Heart left ventricle (tissue), 16 donors: ENCODE measurements at regions of chr2 and their contacts with region 1.

Region 1: GRCh38 chr2:237616734-237617586 is 10.4 kb upstream of the LRRFIP1 start:
- DNase-seq: no peak
- ATAC-seq: peak; percentile 82 to 92 (median 88)
- H3K4me3 ChIP-seq: no peak overlapping the region
- H3K27ac ChIP-seq: peak overlapping the region; percentile 39 to 92 (median 85)
- H3K4me1 ChIP-seq: peaks cover 5 to 52% (median 40%) of the 10 kb centered on the region in 12 donors
- H3K27me3 ChIP-seq: no peaks in the 10 kb centered on the region
- CTCF ChIP-seq: no peak
- POLR2A ChIP-seq: no peak

Region 2: DNA sequence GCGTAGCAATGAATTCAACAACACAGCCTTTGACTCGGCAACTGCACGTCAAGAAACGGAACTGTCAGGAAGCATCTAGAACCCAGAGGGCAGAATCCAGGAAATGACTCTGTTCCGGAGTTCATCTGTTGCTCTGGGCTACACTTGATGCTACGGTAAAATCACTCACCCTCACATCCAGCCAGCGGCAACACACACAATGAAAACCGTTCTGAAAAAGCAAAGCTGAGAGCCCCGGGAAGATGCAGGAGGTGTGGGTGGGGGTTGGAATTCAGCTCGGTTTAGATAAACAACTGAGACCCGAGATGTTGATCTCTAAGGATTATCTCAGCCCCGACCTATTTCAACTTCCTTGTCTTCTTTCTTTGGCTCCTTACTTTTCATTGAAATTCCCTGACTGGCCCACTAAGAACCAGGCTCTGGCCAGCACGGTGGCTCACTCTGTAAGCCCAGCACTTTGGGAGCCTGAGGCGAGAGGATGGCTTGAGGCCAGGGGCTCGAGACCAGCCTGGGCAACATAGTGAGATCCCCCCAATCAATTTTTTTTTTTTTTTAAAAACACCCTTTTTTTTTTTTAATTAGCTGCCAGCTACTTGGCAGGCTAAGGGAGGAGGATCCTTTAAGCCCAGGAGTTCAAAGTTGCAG is 13.1 kb before region 1 on chr2:
- intact Hi-C with region 1: loop called in 1 of 10 experiments (anchors 2 kb)
- DNase-seq: peak in 2 of 5 donors; percentile 54 to 63
- ATAC-seq: peak in 3 of 4 donors; percentile 21 to 70 (median 56)
- H3K4me3 ChIP-seq: peak overlapping the region in 3 of 12 donors; percentile 8 to 15 (median 12)
- H3K27ac ChIP-seq: peak overlapping the region in 7 of 12 donors; percentile 17 to 57 (median 30)
- H3K4me1 ChIP-seq: peaks cover 0 to 41% (median 28%) of the 10 kb centered on the region in 12 donors
- H3K27me3 ChIP-seq: no peaks in the 10 kb centered on the region
- CTCF ChIP-seq: no peak
- POLR2A ChIP-seq: no peak

Region 3: GRCh38 chr2:237886685-237887481 is 269.9 kb after region 1 on chr2:
- intact Hi-C with region 1: no loop called
- DNase-seq: peak; percentile 87 to 97 (median 89)
- ATAC-seq: peak; percentile 86 to 90 (median 88)
- H3K4me3 ChIP-seq: no peak overlapping the region
- H3K27ac ChIP-seq: peak overlapping the region; percentile 65 to 100 (median 92)
- H3K4me1 ChIP-seq: peaks cover 0 to 46% (median 18%) of the 10 kb centered on the region in 12 donors
- H3K27me3 ChIP-seq: no peaks in the 10 kb centered on the region
- CTCF ChIP-seq: no peak
- POLR2A ChIP-seq: no peak

Region 4: DNA sequence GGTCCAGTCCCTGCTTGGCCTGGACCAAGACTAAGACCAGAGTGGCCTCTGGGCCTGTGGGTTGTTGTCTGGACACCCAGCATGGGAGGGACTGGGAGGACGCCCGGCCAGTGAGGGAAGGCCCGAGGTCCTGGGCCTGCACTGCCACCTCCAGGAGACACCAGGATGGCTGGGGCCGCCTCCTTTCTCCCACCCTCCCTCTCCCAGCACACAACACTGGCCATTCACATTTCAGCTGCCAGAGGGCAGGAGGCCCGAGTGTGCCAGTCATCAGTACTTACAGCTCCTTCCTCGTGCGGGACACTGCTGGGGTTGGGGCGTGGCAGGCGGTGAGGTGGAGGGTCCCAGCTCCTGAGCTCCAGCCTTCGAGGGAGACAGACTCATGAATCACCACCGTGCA is 943.3 kb after region 1 on chr2:
- intact Hi-C with region 1: no loop called
- DNase-seq: no peak
- ATAC-seq: peak in 1 of 4 donors; percentile 20
- H3K4me3 ChIP-seq: no peak overlapping the region
- H3K27ac ChIP-seq: no peak overlapping the region
- H3K4me1 ChIP-seq: peaks cover 0 to 7% (median 0%) of the 10 kb centered on the region in 12 donors
- H3K27me3 ChIP-seq: peaks cover 0 to 12% (median 0%) of the 10 kb centered on the region in 9 donors
- CTCF ChIP-seq: no peak
- POLR2A ChIP-seq: no peak